ENCODE measurements at regions of chr11 and their contacts with region 1.

Region 1: DNA sequence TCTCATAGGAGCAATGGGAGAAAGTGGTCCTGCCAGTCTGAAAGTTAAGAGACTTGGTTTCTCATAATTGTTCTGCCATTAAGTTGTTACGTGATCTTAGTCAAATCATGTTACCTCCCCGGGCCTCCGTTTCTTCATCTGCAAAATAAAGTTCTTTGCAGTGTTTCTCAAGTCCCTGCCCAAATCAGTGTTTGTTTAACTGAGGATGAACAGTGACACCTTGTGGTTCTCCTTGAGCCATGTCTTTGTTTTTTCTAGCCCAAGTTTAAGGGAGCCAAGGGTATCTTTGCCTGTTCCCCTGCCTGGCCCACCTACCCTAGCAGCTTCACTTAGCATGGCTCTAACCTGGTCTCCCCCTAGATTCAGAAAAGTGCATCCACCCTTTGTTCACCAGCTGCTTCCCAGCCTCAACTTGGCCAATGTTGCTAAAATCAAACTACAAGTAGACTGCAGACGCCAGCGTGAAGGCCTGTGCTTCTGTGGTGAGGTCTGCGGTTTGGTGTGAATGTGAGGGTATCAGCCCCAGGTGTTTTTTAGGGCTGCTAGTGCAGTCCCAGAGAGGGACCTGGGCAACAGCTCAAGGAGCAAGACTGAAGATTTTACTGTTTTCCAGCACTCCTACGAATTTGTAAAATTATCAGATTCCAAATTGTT is 35.5 kb downstream of the FZD4 start:
- DNase-seq: peak; percentile 88
- H3K4me3 ChIP-seq: no peak overlapping the region
- H3K27ac ChIP-seq: peak overlapping the region; percentile 100
- H3K4me1 ChIP-seq: peaks cover 48% of the 10 kb centered on the region
- H3K27me3 ChIP-seq: no peaks in the 10 kb centered on the region
- CTCF ChIP-seq: peak; percentile 60
- POLR2A ChIP-seq: no peak

Region 2: DNA sequence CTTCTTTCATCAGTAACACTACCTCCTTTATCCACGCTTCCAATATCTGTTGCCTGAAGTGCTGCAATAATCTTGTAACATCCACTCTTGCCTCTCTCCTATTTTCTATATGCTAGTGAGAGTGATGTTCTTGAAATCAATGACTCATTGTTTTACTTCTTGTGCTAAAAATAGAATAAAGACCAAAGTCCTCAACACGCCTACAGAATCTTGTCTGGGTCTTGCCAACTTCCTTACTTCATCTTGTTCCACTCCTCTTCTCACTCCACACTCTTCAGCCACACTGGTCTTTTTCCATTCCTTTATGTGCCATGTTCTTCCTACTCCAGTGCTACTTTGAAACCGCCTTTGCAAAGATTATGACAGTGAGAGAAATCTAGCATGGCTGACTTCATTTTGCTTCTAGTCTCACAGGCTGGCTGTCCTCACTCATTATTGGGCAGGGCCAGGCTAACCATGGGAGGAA is 408.6 kb before region 1 on chr11:
- CTCF ChIA-PET with region 1: no interaction called
- POLR2A ChIA-PET with region 1: no interaction called
- dilution Hi-C with region 1: no loop called
- intact Hi-C with region 1: loop called (anchors 5 kb)
- DNase-seq: peak; percentile 61
- H3K4me3 ChIP-seq: no peak overlapping the region
- H3K27ac ChIP-seq: no peak overlapping the region
- H3K4me1 ChIP-seq: peaks cover 31% of the 10 kb centered on the region
- H3K27me3 ChIP-seq: no peaks in the 10 kb centered on the region
- CTCF ChIP-seq: no peak
- POLR2A ChIP-seq: no peak

Region 3: DNA sequence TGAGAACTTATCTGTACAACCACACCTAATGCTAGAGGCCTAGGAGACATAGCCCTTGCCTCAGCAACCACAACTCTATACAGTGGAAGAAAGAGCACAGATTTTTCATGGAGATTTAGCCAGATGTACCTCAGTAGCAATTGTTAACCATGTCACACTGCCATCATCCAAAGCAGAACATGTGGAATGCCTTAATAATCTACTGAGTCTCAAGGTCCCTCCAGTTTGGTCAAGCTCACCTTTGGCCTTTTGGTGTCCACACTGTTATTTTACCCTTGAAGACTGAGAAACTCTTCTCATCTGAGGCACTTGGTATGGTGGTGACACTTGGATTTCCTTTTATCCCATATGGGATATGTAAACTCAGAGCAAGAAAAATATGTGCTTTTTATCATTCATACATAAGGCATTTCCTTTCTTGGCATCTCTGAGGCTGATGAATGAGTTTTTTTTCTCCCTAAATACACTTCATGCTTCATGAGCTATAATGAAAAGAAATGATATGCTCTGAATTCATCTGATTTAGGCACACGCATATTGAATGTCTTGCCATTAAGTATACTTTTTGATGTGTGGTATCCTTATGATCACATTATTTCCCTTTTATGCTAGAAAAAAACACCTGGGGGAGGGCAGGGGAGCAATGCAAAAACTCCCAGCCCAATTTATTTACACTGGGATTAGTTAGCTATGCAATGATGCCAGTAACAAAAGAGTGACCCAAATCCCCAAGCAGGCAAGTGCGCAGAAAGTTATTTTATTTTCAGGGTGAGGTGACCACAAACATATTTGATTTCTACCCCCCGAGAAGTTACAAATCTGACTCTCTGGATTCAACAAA is 184.0 kb before region 1 on chr11:
- CTCF ChIA-PET with region 1: no interaction called
- POLR2A ChIA-PET with region 1: no interaction called
- dilution Hi-C with region 1: no loop called
- intact Hi-C with region 1: loop called (anchors 2 kb)
- DNase-seq: peak; percentile 78
- H3K4me3 ChIP-seq: no peak overlapping the region
- H3K27ac ChIP-seq: peak overlapping the region; percentile 93
- H3K4me1 ChIP-seq: peaks cover 55% of the 10 kb centered on the region
- H3K27me3 ChIP-seq: no peaks in the 10 kb centered on the region
- CTCF ChIP-seq: no peak
- POLR2A ChIP-seq: peak; percentile 39

Region 4: DNA sequence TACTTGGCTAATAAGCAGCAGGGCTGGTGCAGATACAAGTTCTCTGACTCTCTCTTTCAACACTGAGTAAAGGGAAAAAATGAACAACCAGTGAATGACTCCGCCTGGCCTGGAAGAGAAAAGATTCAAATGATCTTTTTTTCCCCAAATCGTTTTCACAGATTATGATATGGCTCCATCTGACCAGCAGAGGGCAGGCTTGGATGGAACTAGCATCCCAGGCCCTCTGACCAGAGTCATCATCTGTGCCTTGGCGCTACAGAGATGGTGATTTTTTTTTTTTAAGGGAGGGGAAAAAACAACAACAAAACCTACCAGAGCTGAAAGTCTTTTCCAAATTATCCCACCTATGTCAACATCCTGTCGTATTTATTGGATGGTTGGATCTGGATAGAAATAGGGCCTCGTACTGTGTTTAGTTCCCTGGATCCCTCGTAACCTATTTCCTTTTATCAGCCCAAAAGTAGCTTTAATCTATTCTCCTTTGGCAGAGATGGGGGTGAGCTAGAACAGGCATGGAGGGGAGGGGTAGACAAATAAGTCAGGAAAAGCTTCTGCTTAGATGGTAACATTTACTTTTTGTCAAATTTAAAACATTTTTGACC is 49.6 kb before region 1 on chr11:
- CTCF ChIA-PET with region 1: interaction called, 79 read pairs
- POLR2A ChIA-PET with region 1: no interaction called
- dilution Hi-C with region 1: no loop called
- intact Hi-C with region 1: loop called (anchors 1 kb)
- DNase-seq: peak; percentile 67
- H3K4me3 ChIP-seq: no peak overlapping the region
- H3K27ac ChIP-seq: peak overlapping the region; percentile 16
- H3K4me1 ChIP-seq: no peaks in the 10 kb centered on the region
- H3K27me3 ChIP-seq: no peaks in the 10 kb centered on the region
- CTCF ChIP-seq: peak; percentile 69 to 70
- POLR2A ChIP-seq: no peak

Region 5: DNA sequence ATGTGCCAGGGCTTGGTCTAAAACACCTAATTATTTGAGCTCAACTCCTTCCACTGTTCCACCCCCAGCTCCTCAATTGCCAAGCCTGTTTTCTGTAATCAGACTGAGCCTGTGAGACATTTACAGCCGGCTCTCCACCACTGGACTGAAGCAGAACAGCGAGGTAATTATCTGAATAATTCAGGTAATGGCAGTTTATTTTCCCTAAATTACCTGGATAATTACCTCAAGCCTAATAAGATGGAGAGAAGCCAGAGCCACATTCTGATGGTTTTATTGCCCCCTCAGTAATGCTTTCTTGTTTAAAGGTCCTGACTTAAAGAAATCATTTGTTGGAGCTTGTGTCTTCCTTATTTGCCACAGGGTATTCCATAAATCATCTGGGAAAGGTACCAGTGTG is 28.6 kb before region 1 on chr11:
- CTCF ChIA-PET with region 1: interaction called, 3 read pairs
- POLR2A ChIA-PET with region 1: no interaction called
- dilution Hi-C with region 1: no loop called
- intact Hi-C with region 1: loop called (anchors 2 kb)
- DNase-seq: no peak
- H3K4me3 ChIP-seq: no peak overlapping the region
- H3K27ac ChIP-seq: no peak overlapping the region
- H3K4me1 ChIP-seq: no peaks in the 10 kb centered on the region
- H3K27me3 ChIP-seq: no peaks in the 10 kb centered on the region
- CTCF ChIP-seq: no peak
- POLR2A ChIP-seq: no peak

Region 6: GRCh38 chr11:87290304-87290922 is 370.7 kb after region 1 on chr11:
- CTCF ChIA-PET with region 1: no interaction called
- POLR2A ChIA-PET with region 1: no interaction called
- dilution Hi-C with region 1: no loop called
- intact Hi-C with region 1: loop called (anchors 1 kb)
- DNase-seq: peak; percentile 75
- H3K4me3 ChIP-seq: no peak overlapping the region
- H3K27ac ChIP-seq: no peak overlapping the region
- H3K4me1 ChIP-seq: peaks cover 2% of the 10 kb centered on the region
- H3K27me3 ChIP-seq: no peaks in the 10 kb centered on the region
- CTCF ChIP-seq: peak in 1 of 2 donors; percentile 34
- POLR2A ChIP-seq: no peak

Measured in endothelial cell of umbilical vein (primary cell).